Activated CD4-positive, alpha-beta T cell treated with anti-CD3 and anti-CD28 coated beads for 36 hours (primary cell): ENCODE measurements at regions of chr22 and their contacts with region 1.

Region 1: DNA sequence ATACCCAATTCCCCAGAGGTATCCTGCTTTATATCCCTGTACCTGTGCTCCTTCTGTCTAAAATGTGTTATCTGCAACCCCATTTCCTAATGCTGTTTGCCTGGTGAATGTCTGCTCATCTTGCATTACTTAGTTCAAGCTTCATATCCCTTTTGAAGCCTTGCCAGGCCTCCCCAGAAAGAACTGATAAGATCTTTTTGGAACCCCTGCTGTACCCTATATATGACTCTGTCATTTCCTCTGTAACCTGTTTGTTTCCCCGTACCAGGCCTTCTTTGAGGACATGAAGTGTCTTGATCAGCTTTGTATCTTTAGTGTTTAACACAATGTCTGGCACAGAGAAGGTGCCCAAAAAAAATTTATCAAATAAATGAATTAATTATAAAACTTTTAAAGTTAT is 77.6 kb downstream of the LIF start:
- DNase-seq: no peak
- ATAC-seq: peak; percentile 47
- H3K4me3 Mint-ChIP-seq: no peak overlapping the region
- H3K27ac Mint-ChIP-seq: no peak overlapping the region
- H3K4me1 Mint-ChIP-seq: no peaks in the 10 kb centered on the region
- H3K27me3 Mint-ChIP-seq: no peaks in the 10 kb centered on the region

Region 2: DNA sequence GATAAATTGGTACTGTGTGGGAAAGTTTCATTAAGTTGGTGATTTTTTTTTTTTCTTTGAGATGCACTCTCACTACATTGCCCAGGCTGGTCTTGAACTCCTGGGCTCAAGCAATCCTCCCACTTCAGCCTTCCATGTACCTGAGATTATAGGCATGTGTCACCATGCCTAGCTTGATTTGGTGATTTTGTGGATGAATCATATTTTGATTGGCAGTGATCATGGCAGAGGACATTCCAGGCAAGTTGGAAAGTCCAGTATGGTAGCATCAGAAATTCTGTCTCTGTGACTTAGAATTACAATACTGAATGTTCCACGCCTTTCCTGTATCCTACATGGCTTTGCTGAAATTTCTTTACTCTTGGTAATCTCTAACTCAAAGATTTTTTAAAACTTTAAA is 39.4 kb before region 1 on chr22:
- CTCF ChIA-PET with region 1: no interaction called
- POLR2A ChIA-PET with region 1: no interaction called
- intact Hi-C with region 1: loop called in 1 of 2 experiments (anchors 5 kb)
- DNase-seq: no peak
- ATAC-seq: no peak
- H3K4me3 Mint-ChIP-seq: no peak overlapping the region
- H3K27ac Mint-ChIP-seq: no peak overlapping the region
- H3K4me1 Mint-ChIP-seq: peaks cover 11% of the 10 kb centered on the region
- H3K27me3 Mint-ChIP-seq: no peaks in the 10 kb centered on the region

Region 3: GRCh38 chr22:30183861-30184278 is 14.9 kb after region 1 on chr22:
- CTCF ChIA-PET with region 1: interaction called, 8 read pairs
- POLR2A ChIA-PET with region 1: interaction called, 6 read pairs
- intact Hi-C with region 1: loop called (anchors 1 kb)
- DNase-seq: no peak
- ATAC-seq: peak; percentile 57
- H3K4me3 Mint-ChIP-seq: peak overlapping the region; percentile 8
- H3K27ac Mint-ChIP-seq: peak overlapping the region; percentile 84
- H3K4me1 Mint-ChIP-seq: peaks cover 89% of the 10 kb centered on the region
- H3K27me3 Mint-ChIP-seq: no peaks in the 10 kb centered on the region

Region 4: GRCh38 chr22:30490399-30490798 is 321.4 kb after region 1 on chr22:
- CTCF ChIA-PET with region 1: no interaction called
- POLR2A ChIA-PET with region 1: no interaction called
- intact Hi-C with region 1: no loop called
- DNase-seq: no peak
- ATAC-seq: no peak
- H3K4me3 Mint-ChIP-seq: no peak overlapping the region
- H3K27ac Mint-ChIP-seq: no peak overlapping the region
- H3K4me1 Mint-ChIP-seq: no peaks in the 10 kb centered on the region
- H3K27me3 Mint-ChIP-seq: peaks cover 4% of the 10 kb centered on the region